ENCODE measurements at regions of chr21 and their contacts with region 1.

Region 1: DNA sequence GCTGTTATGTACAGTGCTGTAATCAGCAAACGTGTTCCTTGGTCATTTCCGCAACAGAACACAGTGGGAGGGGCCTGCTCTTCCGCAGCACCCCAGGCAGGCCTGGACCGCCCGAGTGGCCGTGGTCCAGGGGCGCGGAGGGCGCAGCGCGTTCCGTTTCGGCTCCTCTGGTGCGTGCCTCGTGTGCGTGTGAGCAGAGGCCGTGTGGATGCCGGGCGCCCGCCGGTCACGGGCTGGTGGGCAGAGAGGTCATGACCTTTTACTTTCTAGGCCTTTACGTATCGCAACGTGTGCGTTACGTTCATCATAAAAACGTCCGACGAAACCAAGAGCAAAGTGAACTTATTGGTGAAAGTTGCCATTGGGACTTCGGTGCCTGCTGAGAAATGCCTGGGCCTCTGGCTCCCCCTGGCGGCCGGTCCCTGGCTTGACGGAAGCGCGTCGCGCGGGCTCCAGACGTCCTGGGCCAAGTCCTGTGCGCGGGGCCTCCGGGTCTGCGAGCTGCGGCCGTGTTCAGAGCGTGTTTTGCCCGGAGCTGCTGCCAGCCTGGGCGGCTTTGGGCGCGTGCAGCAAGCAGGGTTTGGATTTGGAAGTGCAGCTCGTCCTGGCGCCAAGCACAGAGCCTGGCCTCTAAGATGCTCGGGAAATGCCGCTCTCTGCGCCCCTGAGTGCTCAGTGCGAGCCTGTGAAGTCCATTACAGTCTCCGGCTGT is 34.4 kb downstream of the COL18A1 start:
- DNase-seq: peak; percentile 79 to 97 (median 88)
- ATAC-seq: peak; percentile 94
- H3K4me3 ChIP-seq: peak overlapping the region in 1 of 2 donors; percentile 21
- H3K27ac ChIP-seq: peak overlapping the region; percentile 65 to 69
- H3K4me1 ChIP-seq: peaks cover 7 to 15% of the 10 kb centered on the region in 2 donors
- H3K27me3 ChIP-seq: no peaks in the 10 kb centered on the region
- CTCF ChIP-seq: peak; percentile 94 to 98

Region 2: GRCh38 chr21:45140346-45140940 is 298.9 kb before region 1 on chr21:
- intact Hi-C with region 1: loop called in 1 of 2 experiments (anchors 10 kb)
- DNase-seq: peak in 3 of 4 donors; percentile 60 to 87 (median 79)
- ATAC-seq: peak; percentile 93
- H3K4me3 ChIP-seq: no peak overlapping the region
- H3K27ac ChIP-seq: no peak overlapping the region
- H3K4me1 ChIP-seq: no peaks in the 10 kb centered on the region
- H3K27me3 ChIP-seq: no peaks in the 10 kb centered on the region
- CTCF ChIP-seq: peak; percentile 73 to 78

Region 3: DNA sequence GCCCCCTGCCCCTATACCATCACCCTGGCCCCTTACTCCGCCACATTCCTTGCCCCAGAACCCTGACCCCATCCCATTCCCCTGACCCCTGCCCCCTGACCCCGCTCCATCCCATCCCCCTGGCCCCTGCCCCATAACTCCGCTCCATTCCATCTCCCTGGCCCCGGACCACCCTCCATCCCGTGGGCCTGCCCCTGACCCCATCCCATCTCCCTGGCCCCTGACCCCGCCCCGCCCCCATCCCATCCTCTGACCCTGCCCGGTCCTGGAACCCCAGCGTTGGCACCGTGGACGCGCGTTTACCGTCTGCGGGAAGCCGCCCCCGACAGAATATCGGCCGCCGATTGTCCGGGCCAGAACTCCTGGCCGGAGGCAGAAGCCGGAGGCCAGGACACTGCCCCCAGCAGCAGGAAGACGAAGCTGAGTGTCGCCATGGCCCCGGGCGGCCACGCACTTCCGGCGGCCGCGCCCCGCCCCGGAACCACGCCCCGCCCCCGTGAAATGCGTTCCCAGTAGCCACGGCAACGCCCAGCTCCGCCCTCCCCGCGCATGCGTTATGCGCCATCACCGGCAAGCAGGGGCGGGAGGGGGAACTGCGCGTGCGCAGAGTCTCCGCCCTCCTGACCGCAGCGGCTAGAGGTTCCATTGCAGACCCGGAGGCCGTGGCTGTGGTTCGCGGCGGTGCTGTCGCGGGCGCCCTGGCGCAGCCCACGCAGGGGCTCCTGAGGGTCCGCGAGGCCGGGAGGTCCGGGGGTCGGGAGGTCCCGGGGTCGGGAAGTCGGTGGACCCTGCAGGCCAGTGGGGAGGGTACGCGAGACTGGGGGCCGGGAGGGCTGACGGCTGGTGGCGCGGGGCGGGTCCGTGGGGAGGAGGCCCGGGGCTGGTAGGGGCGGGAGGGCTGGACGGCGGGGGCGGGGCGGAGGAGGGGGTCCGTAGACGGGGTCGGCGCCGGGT is 151.6 kb before region 1 on chr21 and contains the start of gene POFUT2:
- intact Hi-C with region 1: loop called (anchors 2 to 5 kb)
- DNase-seq: peak; percentile 94 to 99 (median 98)
- ATAC-seq: peak; percentile 88
- H3K4me3 ChIP-seq: peak within 1 kb of the TSS; percentile 56 to 58
- H3K27ac ChIP-seq: peak within 1 kb of the TSS; percentile 56 to 76
- H3K4me1 ChIP-seq: peaks cover 11 to 35% of the 10 kb centered on the region in 2 donors
- H3K27me3 ChIP-seq: no peaks in the 10 kb centered on the region
- CTCF ChIP-seq: peak in 1 of 2 donors; percentile 23
- polyA plus RNA-seq, gene POFUT2: 30.4 to 44.2 (median 35.5) TPM